B cell (primary cell): ENCODE measurements at regions of chr19 and their contacts with region 1.

Region 1: DNA sequence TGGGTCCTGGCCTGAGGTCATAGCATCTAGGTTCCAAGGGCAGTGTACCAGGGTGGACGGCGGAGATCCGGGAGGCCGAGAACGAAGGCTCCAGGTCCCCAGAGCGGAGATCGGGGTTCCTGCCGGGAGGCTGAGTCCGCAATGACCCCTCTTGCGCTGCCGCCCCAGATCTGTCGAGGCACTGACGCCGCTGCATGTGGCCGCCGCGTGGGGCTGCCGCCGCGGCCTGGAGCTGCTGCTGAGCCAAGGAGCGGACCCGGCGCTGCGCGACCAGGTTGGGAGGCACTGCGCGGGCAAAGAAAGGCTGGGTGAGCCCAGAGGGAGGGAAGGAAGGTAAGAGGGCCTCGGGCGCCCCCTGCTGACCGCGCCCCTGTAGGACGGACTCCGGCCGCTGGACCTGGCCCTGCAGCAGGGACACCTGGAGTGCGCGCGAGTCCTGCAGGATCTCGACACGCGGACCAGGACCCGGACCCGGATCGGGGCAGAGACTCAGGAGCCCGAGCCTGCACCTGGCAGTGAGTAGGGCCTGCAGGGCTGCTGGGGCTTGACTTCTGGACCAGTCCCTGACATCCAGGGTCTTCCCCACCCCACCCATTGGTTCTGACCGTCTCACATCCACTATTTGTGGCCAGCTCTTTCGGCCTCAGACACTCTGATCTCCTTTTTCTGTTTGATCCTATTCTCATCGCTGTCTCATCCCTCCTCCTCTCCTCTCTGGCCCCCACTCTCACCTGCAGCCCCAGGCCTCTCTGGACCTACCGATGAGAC is 971 bp downstream of the ANKLE1 start:
- DNase-seq: peak; percentile 88
- ATAC-seq: peak; percentile 84
- H3K4me3 ChIP-seq: peak overlapping the region; percentile 48 to 92 (median 66)
- H3K4me3 Mint-ChIP-seq: peak overlapping the region; percentile 93
- H3K27ac ChIP-seq: no peak overlapping the region
- H3K27ac Mint-ChIP-seq: peak overlapping the region; percentile 63
- H3K4me1 ChIP-seq: peaks cover 5 to 21% of the 10 kb centered on the region in 2 donors
- H3K4me1 Mint-ChIP-seq: peaks cover 8% of the 10 kb centered on the region
- H3K27me3 ChIP-seq: no peaks in the 10 kb centered on the region
- H3K27me3 Mint-ChIP-seq: no peaks in the 10 kb centered on the region
- CTCF ChIP-seq: peak; percentile 92

Region 2: DNA sequence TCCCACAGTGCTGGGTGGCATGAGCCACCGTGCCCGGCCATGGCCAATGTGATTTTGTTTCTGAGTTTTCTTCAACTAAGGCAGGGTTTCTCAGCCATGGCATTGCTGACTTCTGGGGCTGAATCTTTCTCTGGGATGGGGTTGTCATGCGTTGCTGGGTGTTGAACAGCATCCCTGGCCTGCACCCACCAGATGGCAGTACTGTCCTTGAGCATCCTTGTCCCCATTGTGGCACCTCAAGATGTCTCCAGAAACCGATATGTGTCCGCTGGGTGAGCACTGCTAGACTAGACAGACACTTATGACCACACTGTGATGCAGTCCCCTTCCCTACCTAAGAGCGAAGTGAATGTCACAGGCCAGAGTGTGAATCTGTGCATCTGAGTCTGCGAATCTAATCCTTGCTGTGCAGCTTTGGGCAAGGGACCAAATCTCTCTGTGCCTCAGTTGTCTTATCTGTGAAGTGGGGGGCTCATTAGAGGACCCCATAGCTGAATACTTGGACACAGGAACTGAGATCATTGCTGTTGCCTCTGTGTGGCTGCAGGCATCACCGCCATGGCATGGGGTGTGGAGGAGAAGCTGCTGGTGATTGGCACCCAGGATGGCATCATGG is 503.8 kb before region 1 on chr19:
- CTCF ChIA-PET with region 1: interaction called, 12 read pairs
- POLR2A ChIA-PET with region 1: no interaction called
- intact Hi-C with region 1: loop called (anchors 2 kb)
- DNase-seq: peak; percentile 66
- ATAC-seq: peak; percentile 49
- H3K4me3 ChIP-seq: no peak overlapping the region
- H3K4me3 Mint-ChIP-seq: no peak overlapping the region
- H3K27ac ChIP-seq: no peak overlapping the region
- H3K27ac Mint-ChIP-seq: no peak overlapping the region
- H3K4me1 ChIP-seq: no peaks in the 10 kb centered on the region
- H3K4me1 Mint-ChIP-seq: no peaks in the 10 kb centered on the region
- H3K27me3 ChIP-seq: no peaks in the 10 kb centered on the region
- H3K27me3 Mint-ChIP-seq: peaks cover 13% of the 10 kb centered on the region
- CTCF ChIP-seq: peak; percentile 58

Region 3: GRCh38 chr19:17069218-17069617 is 213.5 kb before region 1 on chr19:
- CTCF ChIA-PET with region 1: interaction called, 17 read pairs
- POLR2A ChIA-PET with region 1: no interaction called
- intact Hi-C with region 1: loop called (anchors 1 kb)
- DNase-seq: no peak
- ATAC-seq: no peak
- H3K4me3 ChIP-seq: no peak overlapping the region
- H3K4me3 Mint-ChIP-seq: no peak overlapping the region
- H3K27ac ChIP-seq: no peak overlapping the region
- H3K27ac Mint-ChIP-seq: no peak overlapping the region
- H3K4me1 ChIP-seq: peaks cover 24 to 45% of the 10 kb centered on the region in 2 donors
- H3K4me1 Mint-ChIP-seq: peaks cover 56% of the 10 kb centered on the region
- H3K27me3 ChIP-seq: no peaks in the 10 kb centered on the region
- H3K27me3 Mint-ChIP-seq: no peaks in the 10 kb centered on the region
- CTCF ChIP-seq: no peak

Region 4: DNA sequence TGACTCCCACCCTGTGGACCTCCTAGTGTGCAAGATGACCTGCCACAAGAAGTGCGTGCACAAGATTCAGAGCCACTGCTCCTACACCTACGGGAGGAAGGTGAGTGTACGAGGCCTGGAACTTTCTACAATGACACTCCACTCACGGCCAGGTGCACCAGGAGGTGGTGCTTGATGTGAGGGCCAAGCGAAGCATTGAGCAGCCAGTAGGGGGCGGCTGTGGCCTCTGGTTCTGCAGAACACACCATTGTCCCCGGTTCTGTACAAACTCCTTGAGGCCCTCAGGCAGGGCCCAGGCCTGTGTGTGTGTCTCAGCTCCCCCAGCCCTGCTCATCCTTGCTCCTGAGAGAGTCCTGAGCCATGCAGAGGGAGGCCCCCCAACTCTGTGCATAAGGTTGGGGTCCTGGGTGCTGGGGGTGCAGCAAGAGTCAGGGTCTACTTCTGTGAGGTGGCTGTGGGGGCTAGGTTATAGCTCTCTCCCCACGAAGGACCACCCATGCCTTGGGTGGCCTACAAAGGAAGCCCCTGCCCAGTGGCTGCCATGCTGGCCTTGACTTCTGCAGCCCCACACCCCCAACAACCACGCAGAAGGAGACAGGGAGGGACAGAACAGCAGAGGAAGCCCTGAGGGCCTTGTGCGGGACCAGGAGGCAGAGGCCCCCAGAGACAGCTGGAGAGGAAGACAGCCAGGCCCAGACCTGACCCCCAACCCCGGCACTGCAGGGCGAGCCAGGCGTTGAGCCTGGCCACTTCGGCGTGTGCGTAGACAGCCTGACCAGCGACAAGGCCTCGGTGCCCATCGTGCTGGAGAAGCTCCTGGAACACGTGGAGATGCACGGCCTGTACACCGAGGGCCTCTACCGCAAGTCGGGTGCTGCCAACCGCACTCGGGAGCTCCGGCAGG is 77.2 kb before region 1 on chr19:
- CTCF ChIA-PET with region 1: interaction called, 13 read pairs
- POLR2A ChIA-PET with region 1: no interaction called
- intact Hi-C with region 1: no loop called
- DNase-seq: peak; percentile 69
- ATAC-seq: peak; percentile 77
- H3K4me3 ChIP-seq: no peak overlapping the region
- H3K4me3 Mint-ChIP-seq: no peak overlapping the region
- H3K27ac ChIP-seq: no peak overlapping the region
- H3K27ac Mint-ChIP-seq: peak overlapping the region; percentile 61
- H3K4me1 ChIP-seq: peaks cover 0 to 7% of the 10 kb centered on the region in 2 donors
- H3K4me1 Mint-ChIP-seq: peaks cover 11% of the 10 kb centered on the region
- H3K27me3 ChIP-seq: no peaks in the 10 kb centered on the region
- H3K27me3 Mint-ChIP-seq: no peaks in the 10 kb centered on the region
- CTCF ChIP-seq: peak; percentile 72

Region 5: GRCh38 chr19:17266975-17267788 is 15.5 kb before region 1 on chr19 and contains the start of gene BABAM1:
- CTCF ChIA-PET with region 1: interaction called, 52 read pairs
- POLR2A ChIA-PET with region 1: interaction called, 8 read pairs
- intact Hi-C with region 1: no loop called
- DNase-seq: peak; percentile 98
- ATAC-seq: peak; percentile 89
- H3K4me3 ChIP-seq: peak within 1 kb of the TSS; percentile 76 to 95 (median 87)
- H3K4me3 Mint-ChIP-seq: peak within 1 kb of the TSS; percentile 84
- H3K27ac ChIP-seq: peak within 1 kb of the TSS; percentile 56 to 67
- H3K27ac Mint-ChIP-seq: peak within 1 kb of the TSS; percentile 86
- H3K4me1 ChIP-seq: peaks cover 6 to 24% of the 10 kb centered on the region in 2 donors
- H3K4me1 Mint-ChIP-seq: peaks cover 18% of the 10 kb centered on the region
- H3K27me3 ChIP-seq: no peaks in the 10 kb centered on the region
- H3K27me3 Mint-ChIP-seq: no peaks in the 10 kb centered on the region
- CTCF ChIP-seq: no peak
- total RNA-seq, gene BABAM1: 126 and 129 TPM in 2 replicates

Region 6: DNA sequence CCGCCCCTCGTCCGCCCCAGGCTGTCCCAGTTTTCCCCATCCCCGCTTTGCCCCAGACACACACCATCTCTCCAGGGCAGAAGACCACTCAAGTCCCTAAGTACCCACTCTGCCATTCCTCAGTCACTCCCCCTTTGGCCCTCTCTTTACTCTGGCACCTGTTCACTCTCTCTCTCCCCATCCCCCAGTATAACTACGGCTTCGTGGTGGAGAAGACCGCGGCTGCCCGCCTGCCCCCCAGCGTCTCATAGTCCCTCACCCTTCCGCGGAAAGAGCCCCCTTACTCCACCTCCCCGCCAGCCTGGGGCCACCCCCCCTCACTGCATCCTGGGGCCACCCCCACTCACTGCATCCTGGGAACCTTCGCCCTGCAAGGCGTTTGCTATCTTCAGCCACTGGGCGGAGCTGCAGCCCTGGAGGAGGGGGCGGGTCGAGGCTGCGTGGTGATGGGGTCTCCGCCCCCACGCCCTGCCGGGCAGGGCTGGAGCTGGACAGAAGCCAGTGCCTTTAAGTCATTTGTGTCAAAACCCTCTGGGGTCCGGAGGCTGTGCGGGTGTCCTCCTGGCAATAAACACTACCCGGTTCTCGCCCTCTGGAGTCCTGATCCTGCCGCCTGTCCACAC is 142.2 kb after region 1 on chr19:
- CTCF ChIA-PET with region 1: no interaction called
- POLR2A ChIA-PET with region 1: no interaction called
- intact Hi-C with region 1: no loop called
- DNase-seq: peak; percentile 29
- ATAC-seq: peak; percentile 44
- H3K4me3 ChIP-seq: no peak overlapping the region
- H3K4me3 Mint-ChIP-seq: no peak overlapping the region
- H3K27ac ChIP-seq: no peak overlapping the region
- H3K27ac Mint-ChIP-seq: no peak overlapping the region
- H3K4me1 ChIP-seq: peaks cover 6 to 9% of the 10 kb centered on the region in 2 donors
- H3K4me1 Mint-ChIP-seq: peaks cover 6% of the 10 kb centered on the region
- H3K27me3 ChIP-seq: no peaks in the 10 kb centered on the region
- H3K27me3 Mint-ChIP-seq: no peaks in the 10 kb centered on the region
- CTCF ChIP-seq: no peak